ENCODE measurements at regions of chr6 and their contacts with region 1.

Region 1: DNA sequence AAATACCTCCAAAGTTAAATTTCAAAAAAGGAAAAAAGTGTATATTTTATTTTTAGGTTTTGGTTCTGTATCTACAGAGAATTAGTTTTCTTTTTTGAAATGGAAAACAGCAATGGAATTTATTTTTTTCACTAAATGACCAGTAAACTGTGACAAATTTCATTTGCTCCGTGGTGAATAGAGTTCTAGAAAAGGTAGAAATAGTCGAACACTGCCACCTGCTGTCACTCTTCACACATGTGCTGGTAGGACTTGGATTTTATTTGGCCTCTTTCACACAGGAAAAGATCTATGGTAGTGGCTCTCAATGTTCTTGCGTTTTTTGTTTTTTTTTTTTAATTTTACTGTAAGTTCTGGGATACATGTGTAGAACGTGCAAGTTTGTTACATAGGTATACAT is 312.5 kb downstream of the EYA4 start:
- DNase-seq: peak; percentile 38
- H3K4me3 ChIP-seq: no peak overlapping the region
- CTCF ChIP-seq: peak; percentile 69

Region 2: GRCh38 chr6:132830334-132830751 is 723.3 kb before region 1 on chr6:
- CTCF ChIA-PET with region 1: interaction called, 14 read pairs
- POLR2A ChIA-PET with region 1: no interaction called
- DNase-seq: no peak
- H3K4me3 ChIP-seq: no peak overlapping the region
- CTCF ChIP-seq: peak; percentile 17

Region 3: GRCh38 chr6:132962936-132963868 is 590.5 kb before region 1 on chr6:
- CTCF ChIA-PET with region 1: interaction called, 21 read pairs
- POLR2A ChIA-PET with region 1: no interaction called
- DNase-seq: no peak
- H3K4me3 ChIP-seq: no peak overlapping the region
- CTCF ChIP-seq: peak; percentile 79

Region 4: GRCh38 chr6:133184798-133185372 is 368.8 kb before region 1 on chr6:
- CTCF ChIA-PET with region 1: interaction called, 58 read pairs
- POLR2A ChIA-PET with region 1: no interaction called
- DNase-seq: peak; percentile 3
- H3K4me3 ChIP-seq: no peak overlapping the region
- CTCF ChIP-seq: peak; percentile 22

Region 5: GRCh38 chr6:133254552-133255228 is 299.0 kb before region 1 on chr6:
- CTCF ChIA-PET with region 1: no interaction called
- POLR2A ChIA-PET with region 1: no interaction called
- DNase-seq: no peak
- H3K4me3 ChIP-seq: no peak overlapping the region
- CTCF ChIP-seq: no peak

Region 6: GRCh38 chr6:133532908-133533307 is 20.7 kb before region 1 on chr6:
- CTCF ChIA-PET with region 1: no interaction called
- POLR2A ChIA-PET with region 1: no interaction called
- DNase-seq: no peak
- H3K4me3 ChIP-seq: no peak overlapping the region
- CTCF ChIP-seq: no peak

Region 7: DNA sequence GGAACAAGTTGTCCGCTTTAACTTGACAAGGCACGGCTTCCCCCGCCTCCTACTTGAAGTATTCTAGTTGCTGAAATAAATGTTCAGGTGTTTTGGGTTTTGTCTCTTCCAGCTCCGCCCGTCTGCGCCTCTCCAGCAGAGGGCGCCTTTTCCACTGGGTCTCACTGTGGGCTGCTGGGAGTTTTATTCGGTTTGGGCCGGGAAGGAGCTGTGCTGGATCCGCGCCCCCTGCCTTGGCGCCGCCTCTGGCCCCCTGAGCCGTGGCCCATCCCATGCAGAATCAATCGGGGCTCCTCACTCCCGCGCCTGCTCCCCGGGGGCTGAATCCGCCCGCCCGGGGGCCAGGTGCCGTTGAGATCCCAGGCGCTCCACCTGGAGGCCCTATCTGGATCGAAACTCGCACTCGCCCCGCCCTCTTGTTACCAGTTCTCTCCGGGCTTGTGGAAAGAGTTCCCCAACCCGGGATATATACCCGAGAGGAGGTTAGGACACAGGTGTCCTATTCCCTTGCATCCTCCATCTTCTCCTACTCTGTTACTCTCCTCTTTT is 284.2 kb after region 1 on chr6:
- CTCF ChIA-PET with region 1: interaction called, 11 read pairs
- POLR2A ChIA-PET with region 1: no interaction called
- DNase-seq: no peak
- H3K4me3 ChIP-seq: peak overlapping the region; percentile 50
- CTCF ChIP-seq: peak; percentile 63